ENCODE measurements at regions of chr6 and their contacts with region 1.

Region 1: GRCh38 chr6:53348371-53349208 is at the start of gene ELOVL5:
- DNase-seq: peak; percentile 100
- ATAC-seq: peak; percentile 91 to 95
- total RNA-seq, gene ELOVL5: 66.6 to 106 TPM

Region 2: DNA sequence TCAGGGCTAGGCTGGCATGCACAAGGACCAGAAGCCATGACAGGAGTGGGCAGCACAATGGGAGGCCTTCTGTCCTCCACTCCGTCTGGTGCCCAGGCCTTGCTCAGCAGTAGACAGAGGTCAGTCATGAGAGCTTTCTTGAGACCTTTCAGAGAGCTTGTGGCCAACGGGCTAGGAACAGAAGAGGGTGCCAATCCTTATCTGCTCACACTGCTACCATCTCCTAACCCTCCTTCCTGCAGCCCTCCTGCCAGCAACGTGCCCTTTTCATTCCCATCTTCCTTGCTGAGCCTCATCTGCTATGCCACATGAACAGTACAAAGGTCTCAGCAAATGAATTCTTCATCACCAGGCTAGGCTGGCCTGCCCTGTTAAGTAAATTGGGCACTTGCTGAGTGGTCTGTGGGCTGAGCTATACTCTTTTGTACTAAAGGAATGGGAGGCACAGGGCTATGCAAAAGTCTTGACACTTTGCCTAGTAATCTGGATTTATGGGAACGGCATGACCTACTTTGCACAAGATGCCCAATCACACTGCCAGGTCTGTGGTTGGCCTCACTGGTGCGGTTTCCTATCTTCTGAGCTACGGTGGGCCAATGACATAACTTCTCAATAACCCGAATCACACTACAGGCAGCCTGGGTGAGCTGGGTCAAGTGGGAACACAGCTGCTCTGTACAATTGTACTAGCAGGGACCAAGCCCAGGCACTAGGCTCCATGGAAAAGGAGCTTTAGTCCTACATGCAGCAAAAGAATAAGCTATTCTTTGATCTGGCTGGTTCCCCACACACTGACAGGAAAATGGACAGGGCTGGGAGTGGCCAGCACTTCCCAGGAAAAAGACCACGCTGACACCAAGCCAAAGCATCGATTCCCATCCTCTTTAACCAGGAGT is 47.7 kb before region 1 on chr6:
- intact Hi-C with region 1: loop called in 1 of 2 experiments (anchors 5 kb)
- DNase-seq: peak; percentile 47
- ATAC-seq: peak; percentile 77 to 85

Measured in left cardiac atrium (tissue), 4 donors.